Naive thymus-derived CD4-positive, alpha-beta T cell (primary cell): ENCODE measurements at regions of chr11 and their contacts with region 1.

Region 1: DNA sequence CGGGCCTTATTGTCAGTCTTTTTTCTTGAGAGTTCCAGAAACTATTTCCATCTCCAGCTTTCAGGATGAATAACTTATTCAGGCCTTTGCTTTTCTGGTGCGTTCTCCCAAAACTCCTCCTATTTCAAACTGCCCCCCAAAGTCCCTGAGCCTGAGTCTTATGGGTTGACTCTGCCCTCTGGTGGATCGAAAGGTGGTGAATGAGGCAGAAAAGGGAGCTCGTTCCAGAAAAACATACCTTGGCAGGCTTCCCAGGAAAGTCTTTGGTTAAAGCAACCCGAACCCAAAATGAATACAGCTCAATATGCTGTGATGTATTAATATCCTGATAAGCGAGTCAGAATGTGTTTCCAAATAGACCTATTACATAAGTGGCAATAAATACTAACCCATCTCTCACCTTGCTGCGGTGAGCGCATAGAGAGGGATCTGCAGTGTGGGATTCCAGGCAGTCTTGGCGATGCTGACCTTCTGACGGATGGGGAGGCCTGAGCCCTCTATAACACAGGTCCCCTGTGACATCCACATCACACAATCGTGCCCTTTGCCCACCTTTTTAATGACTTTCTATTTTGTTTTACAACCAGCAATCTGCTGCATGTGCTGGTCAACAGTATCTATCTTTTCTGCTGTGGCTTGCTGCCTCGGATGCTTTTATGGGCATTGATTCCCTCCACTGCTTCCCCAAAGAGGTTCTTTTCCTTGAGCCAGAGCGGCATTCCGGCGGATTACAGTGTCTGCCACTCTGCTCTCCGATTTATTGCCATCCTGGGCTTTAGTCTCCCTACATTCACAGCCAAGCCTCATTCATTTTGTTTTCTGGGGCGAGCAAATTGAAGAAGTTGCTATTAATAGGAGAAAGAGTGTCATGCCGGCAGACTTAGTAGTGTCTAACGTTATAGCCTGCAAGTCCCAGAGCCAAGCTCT is 756.8 kb downstream of the NTM start:
- DNase-seq: no peak
- ATAC-seq: no peak
- H3K4me3 ChIP-seq: no peak overlapping the region
- H3K4me3 Mint-ChIP-seq: no peak overlapping the region
- H3K27ac ChIP-seq: no peak overlapping the region
- H3K27ac Mint-ChIP-seq: no peak overlapping the region
- H3K4me1 ChIP-seq: no peaks in the 10 kb centered on the region
- H3K4me1 Mint-ChIP-seq: peaks cover 0 to 1% (median 0%) of the 10 kb centered on the region in 7 donors
- H3K27me3 ChIP-seq: no peaks in the 10 kb centered on the region
- H3K27me3 Mint-ChIP-seq: peaks cover 0 to 10% (median 4%) of the 10 kb centered on the region in 5 donors

Region 2: DNA sequence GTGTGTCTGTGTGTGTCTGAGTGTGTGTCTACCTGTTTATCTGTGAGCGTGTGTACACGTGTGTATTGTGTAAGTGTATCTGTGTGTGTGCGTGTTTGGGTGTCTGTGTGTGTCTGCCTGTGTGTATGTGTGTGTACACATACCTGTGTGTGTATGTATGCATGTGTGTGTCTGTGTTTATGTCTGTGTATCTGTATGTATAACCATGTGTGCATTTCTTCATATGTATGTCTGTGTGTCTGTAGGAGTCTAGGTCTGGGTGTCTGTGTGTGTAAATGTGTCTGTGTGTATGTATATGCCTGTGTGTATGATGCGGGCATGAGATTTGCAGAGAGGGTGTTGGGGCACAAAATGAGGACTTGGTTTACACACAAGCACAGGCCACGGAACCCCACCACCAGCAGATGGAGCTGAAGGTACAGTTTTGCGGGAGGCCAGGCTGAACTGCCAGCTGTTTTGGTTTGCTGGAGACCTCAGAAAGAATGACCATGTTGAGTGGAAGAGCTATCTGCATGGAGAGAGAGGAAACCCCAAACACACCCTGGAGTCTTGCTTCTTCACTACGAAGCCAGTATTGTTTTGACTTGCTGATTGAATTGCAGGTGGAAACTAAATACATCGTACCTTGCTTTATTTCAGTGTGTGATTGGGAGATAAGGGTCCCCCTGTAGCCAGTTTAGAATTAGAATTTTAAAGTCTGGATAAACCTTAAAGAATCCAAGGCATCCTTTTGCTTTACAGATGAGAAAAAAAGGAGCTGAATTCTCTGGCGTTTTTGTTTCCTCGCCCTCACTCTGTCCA is 259.6 kb before region 1 on chr11:
- CTCF ChIA-PET with region 1: interaction called, 8 read pairs
- POLR2A ChIA-PET with region 1: no interaction called
- intact Hi-C with region 1: loop called in 1 of 2 experiments (anchors 5 kb)
- DNase-seq: no peak
- ATAC-seq: no peak
- H3K4me3 ChIP-seq: no peak overlapping the region
- H3K4me3 Mint-ChIP-seq: no peak overlapping the region
- H3K27ac ChIP-seq: no peak overlapping the region
- H3K27ac Mint-ChIP-seq: no peak overlapping the region
- H3K4me1 ChIP-seq: no peaks in the 10 kb centered on the region
- H3K4me1 Mint-ChIP-seq: no peaks in the 10 kb centered on the region
- H3K27me3 ChIP-seq: no peaks in the 10 kb centered on the region
- H3K27me3 Mint-ChIP-seq: peaks cover 0 to 6% (median 0%) of the 10 kb centered on the region in 5 donors